Mammary epithelial cell (primary cell): ENCODE measurements at regions of chr17 and their contacts with region 1.

Region 1: GRCh38 chr17:74332763-74333283 is 6.8 kb downstream of the KIF19 start:
- DNase-seq: no peak
- H3K4me3 ChIP-seq: no peak overlapping the region
- H3K27ac ChIP-seq: no peak overlapping the region
- H3K4me1 ChIP-seq: no peaks in the 10 kb centered on the region
- H3K27me3 ChIP-seq: peaks cover 2% of the 10 kb centered on the region
- CTCF ChIP-seq: no peak

Region 2: GRCh38 chr17:74274060-74274708 is 58.6 kb before region 1 on chr17 and contains the start of gene DNAI2:
- CTCF ChIA-PET with region 1: no interaction called
- dilution Hi-C with region 1: no loop called
- in situ Hi-C with region 1: loop called in 1 of 2 experiments (anchors 10 kb)
- intact Hi-C with region 1: no loop called
- DNase-seq: no peak
- H3K4me3 ChIP-seq: no peak within 1 kb of the TSS
- H3K27ac ChIP-seq: no peak within 1 kb of the TSS
- H3K4me1 ChIP-seq: no peaks in the 10 kb centered on the region
- H3K27me3 ChIP-seq: peaks cover 4% of the 10 kb centered on the region
- CTCF ChIP-seq: no peak
- total RNA-seq, gene DNAI2: not detected

Region 3: GRCh38 chr17:74558882-74559519 is 226.2 kb after region 1 on chr17:
- CTCF ChIA-PET with region 1: no interaction called
- dilution Hi-C with region 1: no loop called
- in situ Hi-C with region 1: no loop called
- intact Hi-C with region 1: no loop called
- DNase-seq: no peak
- H3K4me3 ChIP-seq: no peak overlapping the region
- H3K27ac ChIP-seq: no peak overlapping the region
- H3K4me1 ChIP-seq: no peaks in the 10 kb centered on the region
- H3K27me3 ChIP-seq: no peaks in the 10 kb centered on the region
- CTCF ChIP-seq: no peak